ENCODE measurements at regions of chrX and their contacts with region 1.

Region 1: GRCh38 chrX:68196939-68197791 is 236.1 kb downstream of the OPHN1 start:
- DNase-seq: peak; percentile 53
- H3K4me3 ChIP-seq: no peak overlapping the region
- H3K27ac ChIP-seq: no peak overlapping the region
- H3K4me1 ChIP-seq: peaks cover 15% of the 10 kb centered on the region
- H3K27me3 ChIP-seq: no peaks in the 10 kb centered on the region
- CTCF ChIP-seq: peak; percentile 37 to 57
- POLR2A ChIP-seq: no peak

Region 2: GRCh38 chrX:68049466-68049865 is 147.7 kb before region 1 on chrX:
- CTCF ChIA-PET with region 1: no interaction called
- POLR2A ChIA-PET with region 1: no interaction called
- dilution Hi-C with region 1: no loop called
- intact Hi-C with region 1: no loop called
- DNase-seq: no peak
- H3K4me3 ChIP-seq: no peak overlapping the region
- H3K27ac ChIP-seq: no peak overlapping the region
- H3K4me1 ChIP-seq: no peaks in the 10 kb centered on the region
- H3K27me3 ChIP-seq: no peaks in the 10 kb centered on the region
- CTCF ChIP-seq: no peak
- POLR2A ChIP-seq: no peak

Region 3: DNA sequence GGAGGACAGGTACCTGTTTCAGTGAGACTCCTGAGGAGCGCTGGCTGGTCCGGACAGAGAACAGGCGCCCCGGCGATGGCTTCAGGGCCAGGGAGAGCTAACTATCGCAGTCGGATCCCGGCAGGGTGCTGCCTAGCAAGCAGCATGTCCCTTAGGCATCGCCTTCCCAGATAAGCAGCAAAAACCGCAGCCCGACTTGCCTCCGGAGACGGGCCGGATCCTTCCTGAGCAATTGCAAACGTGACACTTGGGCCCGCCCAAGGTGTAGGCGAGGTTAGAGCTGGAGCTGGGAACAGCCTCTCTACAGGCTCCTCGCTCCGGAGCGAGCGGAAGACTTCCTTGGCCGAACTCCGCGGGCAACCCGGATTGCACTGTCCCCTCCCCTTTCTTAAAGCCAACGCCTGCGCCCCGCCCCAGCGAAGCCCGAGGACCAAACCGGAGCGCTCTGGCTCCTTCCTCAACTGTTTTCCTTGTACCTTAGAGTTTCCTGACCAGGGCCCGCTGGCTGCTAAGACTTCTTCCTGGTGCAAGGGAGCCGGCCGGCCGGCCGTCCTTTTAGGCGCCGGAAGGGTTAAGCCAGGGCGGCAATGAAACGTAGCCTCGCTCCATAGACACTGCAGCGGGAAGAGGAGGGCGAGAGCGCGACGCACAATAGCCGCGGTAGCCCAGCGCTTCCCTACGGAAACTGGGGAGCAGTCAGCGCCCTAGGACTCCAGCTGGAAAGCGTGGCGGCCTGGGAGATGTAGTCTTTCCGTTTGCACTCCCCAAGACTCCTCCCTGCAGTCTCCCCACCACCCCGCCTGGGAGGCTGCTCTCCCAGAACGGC is 236.2 kb after region 1 on chrX and contains the start of gene OPHN1:
- CTCF ChIA-PET with region 1: interaction called, 11 read pairs
- POLR2A ChIA-PET with region 1: no interaction called
- dilution Hi-C with region 1: no loop called
- intact Hi-C with region 1: no loop called
- DNase-seq: peak; percentile 72
- H3K4me3 ChIP-seq: peak within 1 kb of the TSS; percentile 44 to 62 (median 59)
- H3K27ac ChIP-seq: peak within 1 kb of the TSS; percentile 64
- H3K4me1 ChIP-seq: peaks cover 9% of the 10 kb centered on the region
- H3K27me3 ChIP-seq: no peaks in the 10 kb centered on the region
- CTCF ChIP-seq: no peak
- POLR2A ChIP-seq: peak; percentile 37
- total RNA-seq, gene OPHN1: 6.2 and 6.7 TPM in 2 replicates

Region 4: DNA sequence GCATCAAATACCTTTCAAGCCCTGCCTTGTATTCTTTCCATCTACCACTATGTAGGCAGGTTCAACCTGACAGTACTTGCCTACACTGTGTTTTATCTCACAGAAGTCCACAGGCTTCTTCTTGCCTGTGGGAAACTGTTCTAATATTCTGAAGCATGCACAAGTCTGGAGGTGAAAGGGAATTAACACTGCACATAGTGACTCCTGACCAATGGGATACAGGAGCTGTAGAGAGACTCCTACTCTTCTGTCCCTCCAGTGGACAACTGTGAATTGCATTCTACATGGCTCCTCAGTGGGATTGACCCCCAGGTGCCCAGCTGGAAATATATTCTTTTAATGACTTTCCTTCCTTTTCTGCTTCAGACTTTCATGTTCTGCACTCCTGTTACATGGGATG is 293.4 kb after region 1 on chrX:
- CTCF ChIA-PET with region 1: interaction called, 65 read pairs
- POLR2A ChIA-PET with region 1: no interaction called
- dilution Hi-C with region 1: no loop called
- intact Hi-C with region 1: loop called (anchors 1 kb)
- DNase-seq: peak; percentile 43
- H3K4me3 ChIP-seq: no peak overlapping the region
- H3K27ac ChIP-seq: no peak overlapping the region
- H3K4me1 ChIP-seq: no peaks in the 10 kb centered on the region
- H3K27me3 ChIP-seq: no peaks in the 10 kb centered on the region
- CTCF ChIP-seq: peak; percentile 23 to 51
- POLR2A ChIP-seq: no peak

Region 5: DNA sequence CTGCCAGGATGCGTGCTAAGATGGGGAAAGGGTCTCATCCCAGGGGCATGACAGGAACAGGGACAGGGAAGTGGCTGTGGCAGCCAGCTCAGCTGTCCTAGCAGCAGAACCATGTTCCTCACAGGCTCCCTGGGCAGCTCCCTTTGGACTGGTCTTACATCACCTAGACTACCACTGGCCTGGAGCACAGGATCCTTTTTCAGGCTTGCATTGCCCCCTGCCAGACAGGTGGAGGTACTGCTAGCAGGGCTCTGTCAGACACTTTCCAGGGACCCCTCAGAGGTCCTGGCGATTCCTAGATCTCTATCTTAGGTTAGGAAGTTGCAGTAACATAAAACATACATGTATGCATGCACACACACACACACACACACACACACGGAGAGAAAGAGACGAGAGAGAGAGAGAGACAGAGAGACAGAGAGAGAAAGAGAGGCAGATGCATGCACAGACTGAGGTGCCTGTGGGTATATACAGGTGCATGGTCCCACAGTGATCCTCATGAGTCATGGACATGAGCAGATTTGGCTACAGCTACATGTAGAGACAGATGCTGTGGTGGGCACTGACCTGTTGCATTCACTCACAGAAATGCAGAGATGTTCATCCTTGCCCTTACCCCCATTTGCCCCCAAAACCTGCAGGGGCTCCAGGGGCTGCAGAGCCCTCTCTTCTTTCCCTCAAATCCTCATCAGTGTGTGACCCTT is 513.9 kb after region 1 on chrX:
- CTCF ChIA-PET with region 1: interaction called, 18 read pairs
- POLR2A ChIA-PET with region 1: no interaction called
- dilution Hi-C with region 1: no loop called
- intact Hi-C with region 1: loop called (anchors 1 kb)
- DNase-seq: peak; percentile 32
- H3K4me3 ChIP-seq: no peak overlapping the region
- H3K27ac ChIP-seq: no peak overlapping the region
- H3K4me1 ChIP-seq: no peaks in the 10 kb centered on the region
- H3K27me3 ChIP-seq: no peaks in the 10 kb centered on the region
- CTCF ChIP-seq: peak; percentile 45 to 48
- POLR2A ChIP-seq: no peak